ENCODE measurements at regions of chr10 and their contacts with region 1.

Region 1: GRCh38 chr10:17617031-17617911 is at the start of gene HACD1:
- DNase-seq: peak; percentile 65
- H3K4me3 ChIP-seq: peak within 1 kb of the TSS; percentile 75 to 86 (median 81)
- H3K27ac ChIP-seq: peak within 1 kb of the TSS; percentile 37
- H3K4me1 ChIP-seq: peaks cover 3% of the 10 kb centered on the region
- H3K27me3 ChIP-seq: peaks cover 3 to 4% of the 10 kb centered on the region in 2 experiments
- CTCF ChIP-seq: peak; percentile 5 to 26
- POLR2A ChIP-seq: peak; percentile 31
- total RNA-seq, gene HACD1: 25.2 and 26.6 TPM in 2 replicates

Region 2: DNA sequence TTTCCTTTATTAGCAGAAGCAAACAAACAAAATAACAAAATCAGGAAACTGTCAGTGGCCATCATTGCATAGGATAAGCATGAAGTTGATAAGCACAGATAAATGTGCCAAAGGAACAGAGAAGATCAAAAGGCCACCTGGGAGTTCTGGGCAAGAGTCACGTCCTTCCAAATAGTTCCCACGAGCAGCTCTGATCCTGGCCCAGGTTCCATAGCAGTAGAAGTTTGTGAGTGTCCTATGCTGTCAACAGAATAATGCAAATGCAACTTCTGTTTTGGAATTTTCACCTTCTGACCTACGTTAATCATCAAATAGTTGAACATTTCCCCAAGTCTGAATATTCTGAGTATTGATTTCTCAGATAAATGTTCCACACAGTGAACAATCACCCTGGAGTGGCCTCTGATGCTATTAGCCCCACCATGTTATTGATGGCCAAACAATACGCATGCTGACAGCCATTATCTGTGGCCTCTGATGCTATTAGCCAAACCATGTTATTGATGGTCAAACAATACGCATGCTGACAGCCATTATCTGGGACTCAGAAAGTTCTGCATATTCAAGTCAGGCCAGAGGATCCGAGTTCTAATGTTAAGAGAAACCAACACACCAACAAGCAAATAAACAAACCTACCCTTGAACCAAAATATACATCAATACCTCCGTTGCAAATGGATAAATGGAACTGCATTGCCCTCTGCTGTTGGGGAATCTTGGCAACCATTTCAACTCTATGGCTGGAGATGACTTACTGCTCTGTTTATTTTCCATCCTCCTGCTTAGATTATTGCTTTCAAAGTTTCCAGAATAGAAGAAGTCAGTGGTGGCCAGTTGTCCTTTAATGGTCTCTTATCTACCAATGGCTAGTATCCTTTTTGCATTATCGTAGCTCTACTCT is 255.2 kb after region 1 on chr10:
- CTCF ChIA-PET with region 1: interaction called, 23 read pairs
- POLR2A ChIA-PET with region 1: no interaction called
- dilution Hi-C with region 1: no loop called
- intact Hi-C with region 1: no loop called
- DNase-seq: peak; percentile 73
- H3K4me3 ChIP-seq: no peak overlapping the region
- H3K27ac ChIP-seq: no peak overlapping the region
- H3K4me1 ChIP-seq: no peaks in the 10 kb centered on the region
- H3K27me3 ChIP-seq: no peaks in the 10 kb centered on the region
- CTCF ChIP-seq: peak; percentile 57 to 58
- POLR2A ChIP-seq: no peak

Measured in endothelial cell of umbilical vein (primary cell).